K562 (cell line): ENCODE measurements at regions of chr6 and their contacts with region 1.

Region 1: DNA sequence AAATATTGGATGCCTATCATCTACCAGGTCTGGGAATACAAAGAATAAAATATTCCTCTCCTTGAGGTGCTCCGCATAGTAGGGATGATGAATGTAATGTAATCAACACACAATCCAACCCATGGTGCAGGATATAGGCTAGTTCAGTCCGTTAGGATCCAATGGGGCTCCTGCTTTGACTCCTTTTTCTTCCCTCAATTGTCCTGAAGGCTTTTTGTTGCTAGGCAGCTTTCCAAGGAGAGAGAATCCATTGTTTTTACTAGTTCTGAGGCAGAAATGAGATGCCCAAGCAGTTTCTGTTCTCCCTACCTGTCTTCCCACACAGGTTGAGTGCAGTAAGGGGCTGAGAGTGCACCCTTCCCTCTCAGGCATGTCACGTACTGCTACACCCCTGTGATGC is 12.1 kb downstream of the WRNIP1 start:
- DNase-seq: no peak
- ATAC-seq: no peak
- H3K4me3 ChIP-seq: no peak overlapping the region
- H3K27ac ChIP-seq: no peak overlapping the region
- H3K4me1 ChIP-seq: peaks cover 0 to 2% of the 10 kb centered on the region in 2 experiments; a peak in 1 of 5 replicates
- H3K27me3 ChIP-seq: no peaks in the 10 kb centered on the region
- CTCF ChIP-seq: no peak
- EP300 ChIP-seq: no peak
- POLR2A ChIP-seq: no peak
- RAD21 ChIP-seq: no peak

Region 2: GRCh38 chr6:2765166-2765895 is 11.9 kb before region 1 on chr6 and contains the start of gene WRNIP1:
- CTCF ChIA-PET with region 1: no interaction called
- POLR2A ChIA-PET with region 1: interaction called, 151 read pairs
- in situ Hi-C with region 1: no loop called
- intact Hi-C with region 1: no loop called
- DNase-seq: peak; percentile 83 to 100 (median 92)
- ATAC-seq: peak; percentile 93
- H3K4me3 ChIP-seq: peak within 1 kb of the TSS; percentile 78
- H3K27ac ChIP-seq: peak within 1 kb of the TSS; percentile 85
- H3K4me1 ChIP-seq: peaks cover 37 to 39% of the 10 kb centered on the region in 2 experiments
- H3K27me3 ChIP-seq: no peaks in the 10 kb centered on the region
- CTCF ChIP-seq: peak; percentile 74 to 95 (median 78)
- EP300 ChIP-seq: no peak
- POLR2A ChIP-seq: no peak
- RAD21 ChIP-seq: peak in 1 of 2 experiments; percentile 17; a peak in 2 of 4 replicates
- polyA plus RNA-seq, gene WRNIP1: 13.2 to 15.9 TPM

Region 3: GRCh38 chr6:2841264-2842138 is 64.3 kb after region 1 on chr6 and contains the start of gene SERPINB1:
- CTCF ChIA-PET with region 1: no interaction called
- POLR2A ChIA-PET with region 1: no interaction called
- in situ Hi-C with region 1: no loop called
- intact Hi-C with region 1: no loop called
- DNase-seq: peak; percentile 92 to 98 (median 94)
- ATAC-seq: peak; percentile 93
- H3K4me3 ChIP-seq: peak within 1 kb of the TSS; percentile 52
- H3K27ac ChIP-seq: peak within 1 kb of the TSS; percentile 84
- H3K4me1 ChIP-seq: peaks cover 27 to 32% of the 10 kb centered on the region in 2 experiments
- H3K27me3 ChIP-seq: no peaks in the 10 kb centered on the region
- CTCF ChIP-seq: peak; percentile 30 to 39 (median 33); a peak in 5 of 6 replicates
- EP300 ChIP-seq: peak; percentile 81
- POLR2A ChIP-seq: peak; percentile 91
- RAD21 ChIP-seq: peak; percentile 15 to 19; a peak in 1 of 4 replicates
- polyA plus RNA-seq, gene SERPINB1: 63.8 to 68.7 TPM